Activated T-helper 1 cell treated with anti-CD3 and anti-CD28 coated beads, Interleukin-12 subunit alpha, Interleukin-12 subunit beta, Interleukin-2, Interleukin-4 antibody, amounts not matched to agents 30 ng/mL and 10 ng/mL and 1 ng/mL, durations not matched to agents 14 hours and 24 hours and 36 hours (primary cell): ENCODE measurements at regions of chr22 and their contacts with region 1.

Region 1: GRCh38 chr22:46674367-46674781 is 54.2 kb downstream of the GRAMD4 start:
- DNase-seq: peak; percentile 83
- H3K4me3 Mint-ChIP-seq: peak overlapping the region; percentile 82
- H3K27ac Mint-ChIP-seq: peak overlapping the region; percentile 94
- H3K4me1 Mint-ChIP-seq: peaks cover 34% of the 10 kb centered on the region
- H3K27me3 Mint-ChIP-seq: no peaks in the 10 kb centered on the region

Region 2: GRCh38 chr22:45318168-45318557 is 1356.2 kb before region 1 on chr22:
- intact Hi-C with region 1: loop called (anchors 2 kb)
- DNase-seq: peak; percentile 83
- H3K4me3 Mint-ChIP-seq: peak overlapping the region; percentile 79
- H3K27ac Mint-ChIP-seq: peak overlapping the region; percentile 97
- H3K4me1 Mint-ChIP-seq: peaks cover 69% of the 10 kb centered on the region
- H3K27me3 Mint-ChIP-seq: no peaks in the 10 kb centered on the region

Region 3: DNA sequence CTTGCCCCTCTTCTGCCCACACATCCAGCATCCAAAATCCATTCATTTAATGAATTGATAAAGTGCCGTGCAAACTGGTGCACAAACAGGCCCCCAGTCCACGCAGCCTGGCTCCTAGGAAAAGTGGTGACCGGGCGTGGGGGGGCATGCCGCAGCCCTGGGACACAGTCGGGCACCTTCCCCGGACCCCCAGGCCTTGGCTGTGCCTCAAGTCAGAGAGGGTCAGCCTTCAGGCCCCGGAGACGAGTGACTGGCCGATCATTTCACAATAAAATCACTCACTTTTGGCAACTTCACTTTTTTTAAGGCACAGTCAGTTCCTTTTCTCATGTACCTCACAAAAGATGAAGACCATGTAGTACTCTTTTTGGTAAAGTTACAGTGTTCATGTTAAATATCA is 432.3 kb before region 1 on chr22:
- intact Hi-C with region 1: no loop called
- DNase-seq: no peak
- H3K4me3 Mint-ChIP-seq: no peak overlapping the region
- H3K27ac Mint-ChIP-seq: no peak overlapping the region
- H3K4me1 Mint-ChIP-seq: peaks cover 17% of the 10 kb centered on the region
- H3K27me3 Mint-ChIP-seq: no peaks in the 10 kb centered on the region

Region 4: DNA sequence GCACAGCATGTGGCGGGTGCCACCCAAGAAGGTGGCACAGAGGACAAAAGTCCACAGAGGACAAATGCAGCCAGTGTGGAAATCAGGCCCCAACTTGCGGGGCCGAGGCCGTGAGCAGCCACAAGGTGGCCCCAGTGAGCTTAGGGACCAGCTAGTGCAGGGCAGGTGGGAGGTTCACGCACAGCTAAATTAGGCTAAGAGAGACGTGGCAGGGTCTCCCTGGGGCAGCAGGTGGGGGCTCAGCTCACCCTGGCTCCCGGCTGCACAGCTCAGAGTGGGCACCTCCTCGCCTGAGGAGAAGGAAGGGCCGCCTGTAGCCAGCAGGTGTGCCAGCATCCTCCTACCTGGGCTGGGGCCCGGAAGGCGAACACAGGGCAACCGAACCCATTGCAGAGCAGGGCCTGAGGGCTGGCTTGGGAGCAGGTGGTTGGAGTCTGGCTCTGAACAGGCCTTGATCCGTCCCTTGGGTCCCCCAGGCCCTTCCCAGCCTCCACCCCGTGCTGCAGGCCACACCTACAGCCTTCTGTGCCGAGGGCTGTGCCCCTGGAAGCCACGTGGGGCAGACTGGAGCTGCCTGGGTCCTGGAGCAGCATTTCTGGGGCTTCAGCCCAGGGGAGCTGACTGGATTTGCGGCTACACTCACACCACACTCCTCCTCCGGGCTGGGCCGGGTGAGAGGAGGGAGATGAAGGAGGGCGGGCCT is 110.8 kb before region 1 on chr22:
- intact Hi-C with region 1: loop called (anchors 1 kb)
- DNase-seq: peak; percentile 68
- H3K4me3 Mint-ChIP-seq: no peak overlapping the region
- H3K27ac Mint-ChIP-seq: no peak overlapping the region
- H3K4me1 Mint-ChIP-seq: peaks cover 8% of the 10 kb centered on the region
- H3K27me3 Mint-ChIP-seq: no peaks in the 10 kb centered on the region

Region 5: DNA sequence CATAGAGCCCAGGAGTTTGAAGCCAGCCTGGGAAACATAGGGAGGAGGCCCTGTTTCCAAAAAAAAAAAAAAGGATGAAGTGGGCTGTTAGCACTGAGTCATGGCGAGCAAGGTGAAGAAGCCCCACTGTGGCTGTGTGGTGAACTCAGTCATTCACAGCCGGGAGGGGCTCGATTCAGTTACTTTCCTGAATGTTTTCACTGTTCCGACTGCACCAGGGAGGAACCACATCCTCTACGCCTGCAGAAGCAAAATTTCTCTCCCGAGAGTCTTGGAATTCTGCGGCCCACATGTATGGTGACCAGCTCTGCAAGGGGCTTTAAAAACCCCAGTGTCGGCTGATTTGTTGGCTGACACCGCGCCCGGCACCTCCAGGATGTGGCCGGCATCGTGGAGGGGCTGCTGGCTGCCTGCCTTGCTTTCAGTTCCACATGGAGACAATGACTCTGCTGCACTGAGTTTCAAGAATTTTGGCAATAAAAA is 81.9 kb before region 1 on chr22:
- intact Hi-C with region 1: loop called (anchors 1 kb)
- DNase-seq: peak; percentile 55
- H3K4me3 Mint-ChIP-seq: peak overlapping the region; percentile 78
- H3K27ac Mint-ChIP-seq: peak overlapping the region; percentile 81
- H3K4me1 Mint-ChIP-seq: peaks cover 24% of the 10 kb centered on the region
- H3K27me3 Mint-ChIP-seq: no peaks in the 10 kb centered on the region

Region 6: GRCh38 chr22:46613606-46614021 is 60.8 kb before region 1 on chr22:
- intact Hi-C with region 1: loop called (anchors 1 kb)
- DNase-seq: no peak
- H3K4me3 Mint-ChIP-seq: peak overlapping the region; percentile 85
- H3K27ac Mint-ChIP-seq: peak overlapping the region; percentile 89
- H3K4me1 Mint-ChIP-seq: peaks cover 38% of the 10 kb centered on the region
- H3K27me3 Mint-ChIP-seq: no peaks in the 10 kb centered on the region

Region 7: DNA sequence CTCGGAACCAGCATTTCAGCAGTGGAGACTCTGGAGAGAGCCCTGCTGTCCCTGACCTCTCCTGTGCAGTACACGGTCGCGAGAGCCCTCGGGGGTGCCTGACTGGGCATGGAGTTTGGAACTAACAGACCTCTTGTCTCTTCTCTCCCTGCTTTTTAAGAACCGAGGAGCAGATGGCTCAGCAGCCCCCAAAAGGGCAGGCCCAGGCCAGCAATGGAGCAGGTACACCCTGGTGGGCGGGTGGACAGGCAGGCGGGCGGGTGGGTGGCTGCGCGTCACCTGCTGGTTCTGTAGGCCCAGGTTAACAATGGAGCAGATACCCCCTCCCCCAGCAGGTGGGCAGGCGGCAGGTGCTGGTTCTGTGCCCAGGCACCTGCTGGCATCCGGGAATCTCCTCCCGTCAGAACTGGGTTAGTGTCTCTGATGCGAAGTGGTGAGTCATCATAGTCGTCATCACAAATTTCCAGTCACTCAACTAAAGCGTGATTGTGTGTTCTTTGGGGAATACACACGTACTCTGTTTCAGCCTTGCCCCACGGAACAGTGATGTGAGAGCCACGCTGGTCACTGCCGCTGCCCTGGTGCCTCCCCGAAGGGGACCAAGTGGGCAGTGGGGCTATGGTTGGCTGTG is 13.0 kb before region 1 on chr22:
- intact Hi-C with region 1: loop called (anchors 1 kb)
- DNase-seq: peak; percentile 26
- H3K4me3 Mint-ChIP-seq: no peak overlapping the region
- H3K27ac Mint-ChIP-seq: peak overlapping the region; percentile 87
- H3K4me1 Mint-ChIP-seq: peaks cover 21% of the 10 kb centered on the region
- H3K27me3 Mint-ChIP-seq: no peaks in the 10 kb centered on the region

Region 8: DNA sequence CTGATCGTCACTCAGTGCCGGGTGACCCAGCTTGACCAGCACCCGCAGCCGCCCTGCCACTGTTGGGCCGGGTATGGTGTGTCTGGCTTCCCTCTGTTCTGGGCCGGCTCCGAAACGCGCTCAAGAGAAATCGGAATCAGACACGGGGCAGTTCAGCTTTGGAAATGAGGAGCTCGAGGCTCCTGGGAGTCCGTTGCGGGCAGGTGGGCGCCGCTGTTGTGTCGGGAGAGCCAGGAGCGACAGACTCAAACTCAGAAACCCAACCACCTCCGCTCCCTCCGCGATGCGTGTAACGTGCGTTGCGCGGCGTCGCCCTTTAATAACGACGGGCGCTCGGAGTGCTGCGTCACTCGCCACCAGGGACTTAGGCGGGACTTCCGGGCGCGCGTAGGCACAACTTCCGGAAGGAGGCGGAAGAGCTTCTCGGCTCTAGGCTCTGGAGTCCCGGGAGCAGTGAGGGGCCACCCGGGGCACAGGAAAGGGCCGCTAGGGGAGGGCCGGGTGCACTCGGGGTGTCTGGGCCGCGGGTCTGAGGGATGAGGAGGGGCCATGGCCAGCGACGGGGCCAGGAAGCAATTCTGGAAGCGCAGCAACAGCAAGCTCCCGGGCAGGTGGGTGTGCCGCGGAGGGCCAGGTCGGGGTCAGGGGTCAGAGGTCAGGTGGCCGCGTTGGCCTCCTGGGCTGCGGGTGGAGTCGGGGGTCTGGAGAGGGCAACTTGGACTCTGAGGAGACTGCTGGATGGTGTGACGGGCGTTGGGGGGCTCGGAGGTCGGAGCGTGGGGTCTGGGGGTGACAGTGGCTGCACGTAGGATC is 88.1 kb after region 1 on chr22 and contains the start of gene TBC1D22A:
- intact Hi-C with region 1: loop called (anchors 1 kb)
- DNase-seq: peak; percentile 91
- H3K4me3 Mint-ChIP-seq: peak within 1 kb of the TSS; percentile 97
- H3K27ac Mint-ChIP-seq: peak within 1 kb of the TSS; percentile 98
- H3K4me1 Mint-ChIP-seq: peaks cover 59% of the 10 kb centered on the region
- H3K27me3 Mint-ChIP-seq: no peaks in the 10 kb centered on the region
- total RNA-seq, gene TBC1D22A: 42.4 and 48.1 TPM in 2 replicates

Region 9: DNA sequence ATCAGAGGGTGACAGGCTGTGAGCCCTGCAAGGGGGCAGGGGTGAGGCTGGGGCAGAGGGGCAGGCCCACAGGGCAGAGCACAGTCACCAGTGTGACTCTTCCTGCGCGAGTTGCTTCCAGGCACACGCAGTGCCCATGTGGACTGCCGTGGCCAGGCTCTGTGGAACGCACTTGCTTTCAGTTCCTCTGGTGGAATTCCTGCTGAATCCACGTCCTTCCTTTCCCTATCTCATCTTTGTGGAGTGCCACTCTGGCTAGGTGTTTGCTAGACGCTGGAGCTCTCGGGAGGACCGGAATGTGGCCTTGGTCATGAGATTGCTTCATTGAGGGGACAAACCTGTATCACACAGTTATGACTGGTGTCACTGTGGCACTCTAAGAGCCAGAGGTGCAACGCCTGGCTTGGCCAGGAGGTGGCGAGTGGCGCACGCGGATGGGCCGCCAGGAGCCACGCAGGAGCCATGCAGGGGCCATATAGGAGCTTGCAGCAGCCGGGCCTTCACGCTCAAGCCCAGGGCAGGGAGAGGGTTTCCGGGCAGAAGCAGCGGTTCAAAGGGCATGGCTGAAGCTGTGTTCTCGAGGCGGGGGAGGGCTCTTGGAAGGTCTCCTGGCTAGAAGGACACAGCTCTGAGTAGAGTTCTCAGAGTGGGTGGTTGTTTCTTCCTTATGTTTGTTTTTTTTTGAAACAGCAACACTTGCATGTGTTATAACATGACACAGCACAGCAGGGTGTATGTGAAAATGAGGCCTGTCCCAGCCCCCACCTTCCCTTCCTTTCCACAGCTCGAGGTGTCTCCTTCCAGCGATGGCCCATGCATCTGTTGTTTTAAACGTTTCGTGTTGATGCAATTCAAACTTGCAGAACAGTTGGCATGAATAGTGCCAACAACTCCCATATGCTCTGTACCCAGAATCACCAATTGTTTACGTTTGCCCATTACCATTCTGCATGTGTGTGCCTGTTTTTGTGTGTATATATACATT is 124.3 kb after region 1 on chr22:
- intact Hi-C with region 1: no loop called
- DNase-seq: peak; percentile 65
- H3K4me3 Mint-ChIP-seq: no peak overlapping the region
- H3K27ac Mint-ChIP-seq: peak overlapping the region; percentile 82
- H3K4me1 Mint-ChIP-seq: peaks cover 21% of the 10 kb centered on the region
- H3K27me3 Mint-ChIP-seq: no peaks in the 10 kb centered on the region